ENCODE measurements at regions of chr7 and their contacts with region 1.

Region 1: DNA sequence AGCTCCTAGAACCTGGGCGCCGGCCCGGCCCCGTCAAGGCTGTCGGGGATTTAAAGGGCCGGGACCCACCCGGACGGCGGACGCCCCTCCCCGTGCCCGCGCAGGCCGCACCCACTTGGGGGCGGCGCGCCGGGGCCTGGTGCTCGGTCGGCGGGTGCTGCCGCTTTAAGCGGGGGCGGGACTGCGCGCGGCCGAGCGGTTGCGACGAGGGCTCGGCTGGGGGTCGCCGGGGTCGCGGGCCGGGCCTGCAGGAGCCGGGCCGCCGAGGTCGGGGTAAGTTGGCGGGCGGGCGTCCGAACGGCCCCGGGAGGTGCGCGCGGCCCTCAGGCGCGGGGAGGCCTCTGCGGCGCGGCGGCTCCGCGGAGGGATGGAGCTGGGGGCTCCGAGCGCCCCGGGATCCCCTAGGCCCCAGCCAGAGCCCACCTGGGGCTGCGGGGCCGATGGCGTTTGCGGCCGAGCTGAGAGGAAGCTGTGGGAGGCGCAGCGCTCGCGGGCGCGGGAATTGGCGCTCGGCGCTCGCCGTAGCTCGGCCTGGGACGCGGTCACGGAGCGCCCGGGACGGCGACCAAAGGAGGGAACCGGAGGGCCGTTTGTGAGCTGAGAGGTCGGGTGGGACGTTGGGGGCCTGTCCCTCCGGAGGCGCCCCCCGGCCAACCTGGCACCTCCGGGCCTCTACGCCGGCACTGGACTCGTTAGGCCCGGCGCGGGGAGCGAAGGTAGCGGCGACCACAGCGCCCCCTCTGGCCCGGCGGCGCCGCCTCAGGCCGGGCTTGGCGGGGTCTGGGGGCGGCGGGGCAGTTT is at the start of gene TRRAP:
- DNase-seq: peak; percentile 63 to 87 (median 82)
- ATAC-seq: peak; percentile 82
- H3K4me3 ChIP-seq: peak within 1 kb of the TSS; percentile 95
- H3K4me3 Mint-ChIP-seq: peak within 1 kb of the TSS; percentile 90 to 99 (median 95)
- H3K27ac ChIP-seq: peak within 1 kb of the TSS; percentile 88
- H3K27ac Mint-ChIP-seq: peak within 1 kb of the TSS; percentile 87 to 98 (median 94)
- H3K4me1 ChIP-seq: peaks cover 9 to 14% of the 10 kb centered on the region in 2 donors
- H3K4me1 Mint-ChIP-seq: peaks cover 0 to 37% (median 26%) of the 10 kb centered on the region in 7 donors
- H3K27me3 ChIP-seq: no peaks in the 10 kb centered on the region
- H3K27me3 Mint-ChIP-seq: peaks cover 0 to 3% (median 0%) of the 10 kb centered on the region in 5 donors
- total RNA-seq, gene TRRAP: 59.1 to 72.3 (median 66.8) TPM

Region 2: DNA sequence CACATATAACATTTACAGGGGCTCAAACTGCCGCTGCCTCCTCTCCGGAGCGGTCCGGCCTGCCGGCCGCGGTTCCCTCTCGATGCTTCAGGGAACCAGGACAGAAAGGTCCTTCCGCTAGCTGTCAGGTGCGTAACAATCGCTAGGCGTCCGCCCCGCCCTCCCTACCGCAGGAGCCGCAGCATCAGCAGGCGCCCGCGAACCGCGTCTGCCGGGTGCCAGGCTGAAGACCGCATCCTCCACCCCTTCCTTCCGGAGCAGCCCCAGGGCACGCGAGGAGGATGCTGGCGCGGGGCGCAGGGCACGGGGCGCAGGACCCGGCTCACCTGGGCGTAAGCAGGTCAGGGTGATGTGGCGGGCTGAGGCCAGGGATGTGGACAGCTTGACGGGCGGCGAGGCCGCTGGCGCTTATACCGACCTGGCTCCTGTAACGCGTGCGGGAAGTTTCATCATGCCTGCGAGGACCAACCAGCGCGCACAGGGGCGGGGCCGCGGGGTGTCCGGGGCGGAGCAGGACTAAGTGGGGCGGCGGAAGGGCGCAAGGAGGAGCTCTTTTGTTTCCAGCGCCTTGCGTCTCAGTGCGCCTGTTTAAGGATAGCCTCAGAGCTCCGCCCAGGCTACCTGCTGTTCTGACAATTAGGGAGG is 1006.4 kb before region 1 on chr7 and contains the start of gene ASNS:
- CTCF ChIA-PET with region 1: no interaction called
- POLR2A ChIA-PET with region 1: no interaction called
- intact Hi-C with region 1: loop called in 1 of 2 experiments (anchors 5 kb)
- DNase-seq: peak; percentile 59 to 92 (median 82)
- ATAC-seq: peak; percentile 92
- H3K4me3 ChIP-seq: peak within 1 kb of the TSS; percentile 79
- H3K4me3 Mint-ChIP-seq: peak within 1 kb of the TSS; percentile 87 to 92 (median 91)
- H3K27ac ChIP-seq: peak within 1 kb of the TSS; percentile 76
- H3K27ac Mint-ChIP-seq: peak within 1 kb of the TSS; percentile 66 to 93 (median 91)
- H3K4me1 ChIP-seq: peaks cover 0 to 15% of the 10 kb centered on the region in 2 donors
- H3K4me1 Mint-ChIP-seq: peaks cover 9 to 26% (median 15%) of the 10 kb centered on the region in 7 donors
- H3K27me3 ChIP-seq: no peaks in the 10 kb centered on the region
- H3K27me3 Mint-ChIP-seq: no peaks in the 10 kb centered on the region
- total RNA-seq, gene ASNS: 23.1 to 49.3 (median 31.8) TPM

Region 3: DNA sequence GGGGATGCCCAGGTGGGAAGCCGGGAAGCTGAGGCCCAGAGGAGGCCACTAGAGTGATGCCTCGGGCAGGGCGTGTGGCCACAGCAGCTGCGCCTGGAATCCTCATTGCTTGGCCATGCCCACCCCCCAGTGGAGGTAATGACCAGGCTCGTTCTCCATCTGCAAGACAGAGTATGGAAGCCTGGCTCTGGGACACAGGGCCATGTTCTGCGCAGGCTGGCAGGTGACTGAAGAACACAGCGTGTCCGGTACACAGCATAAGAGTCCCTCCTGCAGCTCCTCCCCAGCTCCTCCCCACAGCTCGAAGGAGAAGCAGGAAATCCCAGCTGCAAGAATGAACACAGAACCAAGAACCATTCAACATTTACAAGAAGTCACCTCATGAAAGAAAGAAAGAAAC is 200.5 kb after region 1 on chr7:
- CTCF ChIA-PET with region 1: no interaction called
- POLR2A ChIA-PET with region 1: no interaction called
- intact Hi-C with region 1: no loop called
- DNase-seq: peak in 5 of 9 donors; percentile 4 to 17 (median 11)
- ATAC-seq: peak; percentile 46
- H3K4me3 ChIP-seq: no peak overlapping the region
- H3K4me3 Mint-ChIP-seq: peak overlapping the region in 7 of 10 donors; percentile 8 to 65 (median 26)
- H3K27ac ChIP-seq: peak overlapping the region; percentile 17
- H3K27ac Mint-ChIP-seq: peak overlapping the region in 4 of 9 donors; percentile 34 to 70 (median 52)
- H3K4me1 ChIP-seq: no peaks in the 10 kb centered on the region
- H3K4me1 Mint-ChIP-seq: peaks cover 21 to 76% (median 58%) of the 10 kb centered on the region in 7 donors
- H3K27me3 ChIP-seq: no peaks in the 10 kb centered on the region
- H3K27me3 Mint-ChIP-seq: no peaks in the 10 kb centered on the region